Common myeloid progenitor, CD34-positive (primary cell): ENCODE measurements at regions of chr11 and their contacts with region 1.

Region 1: DNA sequence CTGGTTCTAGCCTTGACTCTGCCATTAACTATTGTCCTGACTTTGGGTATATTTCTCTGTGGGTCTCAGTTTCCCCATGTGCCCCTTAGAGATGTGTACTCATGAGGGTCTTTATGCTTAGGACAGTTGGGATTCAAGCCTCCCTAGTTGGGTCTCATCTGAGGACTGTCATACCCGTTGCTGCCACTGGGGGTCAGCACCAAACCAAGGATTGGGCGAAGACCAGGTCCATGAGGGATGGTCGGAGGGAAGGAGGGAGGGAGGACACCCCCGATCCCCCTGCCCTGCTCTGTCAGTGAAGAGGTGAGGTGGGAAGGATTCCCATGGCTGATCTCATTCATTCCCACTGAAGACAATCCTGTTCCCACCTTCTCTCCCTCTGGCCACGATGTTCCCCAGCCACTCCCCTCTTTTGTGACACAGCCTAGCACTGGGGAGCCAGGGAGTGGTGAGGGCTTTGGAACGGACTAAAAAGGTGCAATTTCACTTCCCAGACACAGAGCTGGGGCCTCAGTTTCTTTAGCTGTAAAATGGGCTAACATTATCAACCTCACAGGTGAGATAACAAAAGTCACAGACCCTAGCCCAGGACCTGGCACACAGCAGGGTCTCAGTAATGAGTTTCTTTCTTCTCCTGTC is 12.4 kb upstream of the KLHL35 start:
- DNase-seq: peak; percentile 48 to 71 (median 63)
- H3K4me3 ChIP-seq: no peak overlapping the region
- H3K27ac ChIP-seq: no peak overlapping the region
- H3K4me1 ChIP-seq: no peaks in the 10 kb centered on the region
- H3K27me3 ChIP-seq: no peaks in the 10 kb centered on the region

Region 2: DNA sequence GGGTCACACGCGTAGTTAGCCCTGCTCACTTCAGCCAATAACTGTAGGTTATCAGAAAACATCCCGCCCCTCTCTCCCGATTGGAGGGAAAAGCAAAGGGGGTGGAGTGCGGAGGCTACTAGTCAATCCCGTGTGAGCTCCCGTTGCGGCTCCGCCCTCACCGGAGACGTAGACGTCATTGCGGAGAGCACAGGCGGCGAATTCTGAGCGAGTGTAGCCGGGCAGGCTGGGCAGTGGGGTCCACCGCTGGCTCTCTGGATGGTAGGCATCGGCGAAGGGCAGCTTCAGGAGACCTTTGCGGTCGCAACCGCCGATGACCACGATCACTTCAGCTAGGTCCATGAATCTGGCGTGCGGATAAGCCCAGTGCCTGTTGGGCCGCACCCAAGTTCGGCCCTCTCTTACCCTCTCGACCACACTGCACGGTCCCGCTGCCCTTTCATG is 17.1 kb before region 1 on chr11:
- CTCF ChIA-PET with region 1: interaction called, 26 read pairs
- POLR2A ChIA-PET with region 1: no interaction called
- DNase-seq: peak; percentile 74 to 91 (median 91)
- H3K4me3 ChIP-seq: peak overlapping the region in 2 of 7 experiments; percentile 44 to 64
- H3K27ac ChIP-seq: no peak overlapping the region
- H3K4me1 ChIP-seq: peaks cover 0 to 27% (median 13%) of the 10 kb centered on the region in 4 experiments
- H3K27me3 ChIP-seq: peaks cover 4 to 67% (median 34%) of the 10 kb centered on the region in 5 experiments

Region 3: DNA sequence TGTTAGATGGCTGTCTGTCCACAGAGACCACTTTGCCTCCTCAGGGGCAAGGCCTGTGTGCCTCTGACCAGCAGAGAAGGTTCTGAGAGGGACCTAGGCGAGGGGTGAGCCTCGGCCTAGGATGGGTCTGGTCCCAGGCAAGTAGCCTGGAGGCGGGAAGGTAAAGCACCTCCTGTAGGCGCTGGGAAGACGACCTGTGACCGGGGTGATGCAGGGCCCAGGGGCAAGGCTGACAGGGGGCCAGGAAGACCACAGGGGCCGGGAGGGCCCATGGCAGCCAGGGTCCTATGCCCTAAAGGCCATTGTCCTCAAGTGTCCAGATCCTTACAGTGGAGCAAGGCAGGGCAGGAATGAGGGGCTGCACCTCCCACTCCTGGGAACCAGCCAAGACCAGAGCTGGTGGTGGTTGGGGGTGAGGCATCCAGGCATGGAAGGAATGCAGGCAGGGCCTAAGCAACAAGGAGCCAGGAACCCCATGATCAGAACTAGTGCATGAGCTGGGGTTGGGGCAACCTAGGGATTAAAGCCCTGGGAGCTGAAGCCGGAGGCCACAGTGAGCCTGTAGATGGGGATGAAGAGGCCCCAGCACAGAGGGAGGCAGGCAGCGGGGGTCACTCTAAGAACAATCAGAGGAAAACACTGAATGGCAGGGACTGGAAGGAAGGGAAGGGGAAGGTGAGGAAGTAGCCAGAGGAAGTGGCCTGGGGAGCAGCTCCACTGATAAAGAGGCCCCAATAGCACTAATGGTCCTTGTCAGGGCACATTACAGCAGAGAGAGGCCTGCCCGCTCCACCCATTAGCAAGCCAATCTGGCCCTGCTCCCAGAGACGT is 20.5 kb after region 1 on chr11:
- CTCF ChIA-PET with region 1: interaction called, 10 read pairs
- POLR2A ChIA-PET with region 1: no interaction called
- DNase-seq: no peak
- H3K4me3 ChIP-seq: no peak overlapping the region
- H3K27ac ChIP-seq: no peak overlapping the region
- H3K4me1 ChIP-seq: peaks cover 0 to 15% (median 1%) of the 10 kb centered on the region in 4 experiments
- H3K27me3 ChIP-seq: no peaks in the 10 kb centered on the region

Region 4: DNA sequence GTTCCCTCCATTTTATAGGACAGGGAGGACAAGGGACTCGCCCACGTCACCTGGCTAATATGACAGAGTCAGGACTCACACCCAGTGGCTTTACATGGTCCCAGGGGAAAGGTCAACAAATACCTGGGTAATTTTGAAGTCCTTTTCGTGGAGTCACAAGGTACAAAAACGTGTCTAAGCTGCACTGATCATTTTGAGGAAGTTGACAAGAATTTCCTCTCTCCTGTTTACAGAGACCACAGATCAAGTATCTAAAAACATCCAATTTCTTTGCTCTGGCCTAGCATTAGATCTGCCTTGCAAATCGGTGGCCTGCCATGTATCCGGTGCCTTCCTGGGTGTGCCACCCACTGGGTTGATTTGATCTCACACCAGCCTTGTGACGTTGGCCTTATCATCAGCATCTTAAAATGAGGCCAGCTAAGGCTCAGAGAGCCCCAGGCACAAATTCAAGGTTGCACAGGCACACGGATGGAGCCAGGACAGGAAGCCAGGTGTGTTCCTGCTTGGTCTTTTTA is 62.7 kb after region 1 on chr11:
- CTCF ChIA-PET with region 1: interaction called, 12 read pairs
- POLR2A ChIA-PET with region 1: no interaction called
- DNase-seq: peak; percentile 26 to 68 (median 59)
- H3K4me3 ChIP-seq: no peak overlapping the region
- H3K27ac ChIP-seq: no peak overlapping the region
- H3K4me1 ChIP-seq: peaks cover 0 to 30% (median 21%) of the 10 kb centered on the region in 4 experiments
- H3K27me3 ChIP-seq: no peaks in the 10 kb centered on the region

Region 5: GRCh38 chr11:75520688-75521087 is 75.3 kb after region 1 on chr11:
- CTCF ChIA-PET with region 1: interaction called, 18 read pairs
- POLR2A ChIA-PET with region 1: no interaction called
- DNase-seq: no peak
- H3K4me3 ChIP-seq: no peak overlapping the region
- H3K27ac ChIP-seq: no peak overlapping the region
- H3K4me1 ChIP-seq: peaks cover 0 to 39% (median 31%) of the 10 kb centered on the region in 4 experiments
- H3K27me3 ChIP-seq: peaks cover 0 to 22% (median 11%) of the 10 kb centered on the region in 5 experiments

Region 6: DNA sequence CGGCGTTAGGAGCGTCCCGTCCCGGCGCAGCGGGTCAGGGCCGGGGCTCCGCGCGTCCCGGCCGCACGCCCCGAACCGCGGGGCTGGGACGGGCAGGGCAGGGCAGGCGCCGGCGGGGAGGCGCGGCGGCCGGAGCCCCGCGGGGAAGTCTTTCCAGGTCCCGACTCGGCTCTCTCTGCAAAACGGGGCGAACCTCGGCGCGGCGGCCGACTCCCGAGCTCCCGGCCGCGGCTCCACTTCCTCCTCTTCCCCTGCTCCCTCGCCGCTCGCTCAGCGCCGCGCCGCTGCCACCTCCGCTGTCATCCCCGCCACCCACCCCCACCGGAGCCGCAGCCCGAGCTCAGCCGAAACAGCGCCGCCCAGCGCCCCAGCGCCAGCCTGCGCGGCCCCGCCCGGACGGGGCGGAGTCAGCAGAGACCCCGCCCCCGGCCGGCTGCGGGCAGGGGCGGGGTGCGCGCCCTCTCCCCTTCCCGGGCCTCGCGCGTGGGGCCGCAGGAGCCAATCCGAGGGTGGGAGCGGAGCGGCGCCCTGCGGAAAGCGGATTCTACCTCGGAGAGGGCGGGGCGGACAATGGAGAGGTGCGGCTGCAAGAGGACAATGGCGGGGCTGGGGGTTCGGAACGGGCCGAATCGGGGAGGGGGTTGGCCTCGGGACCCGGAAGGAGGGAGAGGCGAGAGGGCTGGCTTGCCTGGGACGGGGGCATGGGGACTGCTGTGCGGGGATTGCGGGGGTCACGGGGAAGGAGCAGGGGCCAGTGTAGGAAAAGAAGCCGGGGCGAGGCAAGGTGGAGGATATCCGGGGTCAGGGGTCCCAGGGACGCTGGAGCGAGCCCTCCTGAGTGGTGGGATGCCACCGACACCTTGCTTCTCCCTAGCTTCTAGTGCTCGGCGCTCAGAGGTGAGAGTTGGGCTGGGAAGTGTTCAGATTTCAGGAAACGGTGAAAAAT is 80.4 kb after region 1 on chr11 and contains the start of gene GDPD5:
- CTCF ChIA-PET with region 1: interaction called, 229 read pairs
- POLR2A ChIA-PET with region 1: no interaction called
- DNase-seq: peak; percentile 81 to 91 (median 91)
- H3K4me3 ChIP-seq: peak within 1 kb of the TSS; percentile 60 to 91 (median 76)
- H3K27ac ChIP-seq: no peak within 1 kb of the TSS
- H3K4me1 ChIP-seq: peaks cover 0 to 20% (median 17%) of the 10 kb centered on the region in 4 experiments
- H3K27me3 ChIP-seq: peaks cover 0 to 22% (median 11%) of the 10 kb centered on the region in 5 experiments

Region 7: DNA sequence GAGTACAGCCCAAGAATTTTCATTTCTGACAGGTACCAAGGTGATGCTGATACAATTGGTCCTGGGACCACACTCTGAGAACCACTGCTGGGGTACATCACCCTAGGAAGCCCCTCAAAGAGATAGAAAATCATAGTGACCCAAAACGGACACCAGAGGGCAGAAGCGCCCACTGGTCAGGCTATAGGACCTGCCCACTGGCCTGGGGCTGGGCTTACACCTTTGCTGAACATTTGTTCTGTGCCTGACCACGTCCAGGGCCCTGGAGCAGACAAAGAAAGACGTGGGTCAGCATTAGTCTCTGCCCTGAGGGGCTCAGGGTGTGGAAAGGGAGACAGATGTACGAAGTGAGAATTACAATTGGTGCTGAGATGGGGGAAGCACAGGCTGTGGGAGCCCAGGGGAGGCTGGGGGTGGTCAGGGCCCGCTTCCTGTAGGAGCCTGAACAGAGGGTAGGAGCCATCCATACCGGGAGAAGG is 102.2 kb after region 1 on chr11:
- CTCF ChIA-PET with region 1: interaction called, 11 read pairs
- POLR2A ChIA-PET with region 1: no interaction called
- DNase-seq: peak in 2 of 3 donors; percentile 32 to 46
- H3K4me3 ChIP-seq: no peak overlapping the region
- H3K27ac ChIP-seq: no peak overlapping the region
- H3K4me1 ChIP-seq: peaks cover 0 to 7% (median 2%) of the 10 kb centered on the region in 4 experiments
- H3K27me3 ChIP-seq: peaks cover 0 to 3% (median 0%) of the 10 kb centered on the region in 5 experiments